Cardiac septum (tissue), 1 donor: ENCODE measurements at regions of chr14 and their contacts with region 1.

Region 1: GRCh38 chr14:77457522-77458290 is at the starts of genes AHSA1 and VIPAS39:
- DNase-seq: peak; percentile 98
- total RNA-seq, gene AHSA1: 138 TPM
- total RNA-seq, gene VIPAS39: 12.5 TPM

Region 2: DNA sequence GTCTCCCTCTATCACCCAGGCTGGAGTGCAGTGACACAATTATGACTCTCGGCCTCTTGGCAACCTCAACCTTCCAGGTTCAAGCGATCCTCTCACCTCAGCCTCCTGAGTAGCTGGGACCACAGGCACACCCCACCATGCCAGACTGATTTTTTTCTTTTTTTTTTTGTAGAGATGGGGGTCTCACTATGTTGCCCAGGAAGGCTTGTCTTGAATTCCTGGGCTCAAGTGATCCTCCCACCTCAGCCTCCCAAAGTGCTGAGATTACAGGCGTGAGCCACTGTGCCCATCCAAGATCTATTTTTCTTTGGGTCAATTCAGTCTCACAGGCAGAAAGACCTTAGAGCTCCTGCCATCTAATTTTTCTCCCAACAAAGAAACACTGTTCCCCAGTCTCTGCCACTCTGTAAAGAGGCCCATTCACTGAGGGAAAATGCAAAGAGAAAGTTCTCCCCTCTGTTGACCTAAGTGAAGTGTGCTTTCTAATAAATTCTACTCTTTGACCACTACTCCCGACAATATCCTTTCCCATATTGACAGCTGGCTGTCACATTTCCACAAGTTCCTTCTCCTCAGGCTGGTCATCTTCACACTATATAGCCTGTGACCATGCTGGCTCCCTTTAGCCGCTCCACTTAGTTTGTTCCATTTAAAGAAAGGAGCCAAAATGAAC is 104.1 kb before region 1 on chr14:
- intact Hi-C with region 1: no loop called
- DNase-seq: no peak

Region 3: GRCh38 chr14:77390188-77390587 is 67.5 kb before region 1 on chr14:
- intact Hi-C with region 1: no loop called
- DNase-seq: no peak

Region 4: DNA sequence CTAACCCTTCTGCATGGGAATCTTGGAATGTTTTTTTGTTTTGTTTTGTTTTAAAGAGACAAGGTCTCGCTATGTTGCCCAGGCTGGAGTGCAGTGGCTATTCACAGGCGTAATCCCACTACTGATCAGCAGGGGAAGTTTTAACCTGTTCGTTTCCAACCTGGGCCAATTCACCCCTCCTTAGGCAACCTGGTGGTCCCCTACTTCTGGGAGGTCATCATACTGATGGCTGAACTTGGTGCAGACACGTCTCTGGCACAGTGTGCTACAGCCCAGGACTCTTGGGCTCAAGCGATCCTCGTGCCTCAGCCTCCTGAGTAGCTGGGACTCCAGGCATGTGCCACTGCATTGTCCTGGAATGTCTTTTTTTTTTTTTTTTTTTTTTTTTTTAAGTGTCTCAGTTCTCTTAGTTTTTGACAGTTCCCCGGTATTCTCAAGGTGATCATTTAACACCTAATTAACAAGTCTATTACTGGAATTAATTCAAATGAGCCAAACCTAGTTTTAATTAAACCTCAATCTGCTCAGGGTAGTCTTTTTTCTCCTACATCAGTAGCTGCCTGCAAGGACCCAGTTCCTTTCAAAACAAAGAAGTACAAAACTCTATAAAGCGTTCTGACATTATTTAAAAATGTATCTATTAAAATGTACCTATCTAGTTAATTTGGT is 89.9 kb after region 1 on chr14:
- intact Hi-C with region 1: loop called (anchors 5 kb)
- DNase-seq: no peak